RWPE1 (cell line): ENCODE measurements at regions of chr3 and their contacts with region 1.

Region 1: GRCh38 chr3:149765762-149766334 is 13.6 kb upstream of the COMMD2 start:
- DNase-seq: peak; percentile 9
- H3K27ac ChIP-seq: no peak overlapping the region
- CTCF ChIP-seq: peak; percentile 66

Region 2: GRCh38 chr3:148344522-148344921 is 1421.3 kb before region 1 on chr3:
- CTCF ChIA-PET with region 1: no interaction called
- POLR2A ChIA-PET with region 1: no interaction called
- DNase-seq: no peak
- H3K27ac ChIP-seq: no peak overlapping the region
- CTCF ChIP-seq: no peak

Region 3: GRCh38 chr3:149299938-149300791 is 465.7 kb before region 1 on chr3:
- CTCF ChIA-PET with region 1: no interaction called
- POLR2A ChIA-PET with region 1: no interaction called
- DNase-seq: peak; percentile 80
- H3K27ac ChIP-seq: no peak overlapping the region
- CTCF ChIP-seq: no peak

Region 4: GRCh38 chr3:149603126-149604074 is 162.4 kb before region 1 on chr3:
- CTCF ChIA-PET with region 1: no interaction called
- POLR2A ChIA-PET with region 1: no interaction called
- DNase-seq: peak; percentile 70
- H3K27ac ChIP-seq: no peak overlapping the region
- CTCF ChIP-seq: no peak

Region 5: DNA sequence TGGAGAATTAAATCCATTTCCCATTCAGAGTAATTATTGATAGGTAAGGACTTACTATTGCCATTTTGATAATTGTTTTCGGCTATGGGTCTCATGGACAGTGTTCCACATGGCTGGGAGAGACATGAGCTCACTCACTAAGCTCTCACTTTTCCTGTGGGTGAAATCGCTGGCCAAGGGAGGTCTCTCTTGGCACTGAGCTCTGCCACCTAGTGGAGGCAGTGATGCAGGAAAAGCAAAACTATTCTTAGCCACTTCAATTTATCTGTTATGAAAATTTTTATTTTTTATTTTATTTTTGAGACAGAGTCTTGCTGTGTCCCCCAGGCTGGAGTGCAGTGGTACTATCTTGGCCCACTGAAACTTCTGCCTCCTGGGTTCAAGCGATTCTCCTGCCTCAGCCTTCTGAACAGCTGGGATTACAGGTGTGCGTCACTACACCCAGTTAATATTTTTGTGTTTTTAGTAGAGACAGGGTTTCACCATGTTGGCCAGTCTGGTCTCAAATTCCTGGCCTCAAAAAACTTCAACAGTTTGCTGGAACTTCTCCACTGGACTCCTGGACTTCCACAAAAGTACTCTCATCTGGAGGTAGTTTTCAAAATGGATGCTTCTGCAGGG is 42.5 kb after region 1 on chr3:
- CTCF ChIA-PET with region 1: interaction called, 45 read pairs
- POLR2A ChIA-PET with region 1: no interaction called
- DNase-seq: peak; percentile 68
- H3K27ac ChIP-seq: no peak overlapping the region
- CTCF ChIP-seq: peak; percentile 87